A549 (cell line): ENCODE measurements at regions of chr4 and their contacts with region 1.

Region 1: DNA sequence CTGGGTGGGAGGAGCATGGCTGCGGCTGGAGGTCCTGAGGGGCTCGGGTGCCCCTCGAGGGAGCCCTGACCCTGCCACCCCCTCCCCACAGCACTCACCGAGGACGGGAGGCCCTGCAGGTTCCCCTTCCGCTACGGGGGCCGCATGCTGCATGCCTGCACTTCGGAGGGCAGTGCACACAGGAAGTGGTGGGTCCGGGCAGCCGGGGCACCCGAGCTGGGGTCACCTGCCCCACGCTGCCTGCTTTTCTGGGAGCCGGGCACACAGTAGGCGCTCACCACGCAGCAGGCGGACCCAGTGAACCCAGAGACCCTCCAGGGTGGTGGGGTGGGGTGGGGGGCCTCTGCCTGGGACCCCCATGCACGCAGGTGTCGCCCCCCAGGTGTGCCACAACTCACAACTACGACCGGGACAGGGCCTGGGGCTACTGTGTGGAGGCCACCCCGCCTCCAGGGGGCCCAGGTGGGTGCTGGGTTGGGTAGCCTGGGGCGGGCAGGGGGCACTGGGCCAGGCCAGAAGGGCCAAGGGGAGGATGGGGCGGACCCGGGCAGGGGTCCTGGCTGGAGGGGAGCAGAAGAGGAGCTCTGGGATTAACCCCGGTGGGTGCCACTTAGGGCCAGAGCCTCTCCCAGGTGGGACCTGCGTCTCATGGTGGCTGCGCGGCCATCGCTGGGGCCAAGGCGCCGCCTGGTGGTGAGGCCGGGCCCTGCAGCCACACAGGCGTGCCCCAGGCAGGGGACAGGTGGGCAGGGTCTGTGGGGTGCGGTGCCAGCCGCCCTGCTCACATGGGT is 1.4 kb downstream of the HGFAC start:
- DNase-seq: peak; percentile 40 to 58
- ATAC-seq: peak; percentile 54 to 86; a peak in 4 of 6 replicates
- H3K4me3 ChIP-seq: no peak overlapping the region
- H3K27ac ChIP-seq: peak overlapping the region in 1 of 2 experiments; percentile 38; a peak in 1 of 6 replicates
- H3K4me1 ChIP-seq: peaks cover 6% of the 10 kb centered on the region; the same call in 1 of the 3 replicates
- CTCF ChIP-seq: peak; percentile 84
- EP300 ChIP-seq: no peak
- POLR2A ChIP-seq: no peak
- RAD21 ChIP-seq: peak; percentile 80 to 88

Region 2: DNA sequence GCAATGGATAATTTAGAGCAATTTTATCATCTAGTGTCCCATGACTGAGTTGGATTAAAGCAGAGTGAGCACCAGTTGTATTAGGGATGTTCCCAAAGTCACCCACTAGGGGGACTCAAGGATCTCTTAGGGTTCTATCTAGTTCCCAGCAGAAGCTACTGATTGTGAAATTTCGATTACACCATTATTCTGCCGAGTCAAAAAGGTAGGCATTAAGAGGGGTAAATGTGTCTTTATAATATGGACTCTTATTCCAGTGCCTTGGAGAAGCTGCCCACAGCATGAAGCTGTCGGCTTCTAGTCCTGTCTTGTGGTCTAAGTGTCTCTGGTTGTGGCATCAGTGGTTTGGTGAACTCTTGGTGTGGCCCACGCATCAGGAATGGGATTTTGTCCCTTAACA is 97.0 kb before region 1 on chr4:
- CTCF ChIA-PET with region 1: interaction called, 30 read pairs
- POLR2A ChIA-PET with region 1: no interaction called
- DNase-seq: peak; percentile 60 to 63
- ATAC-seq: peak; percentile 85 to 92
- H3K4me3 ChIP-seq: no peak overlapping the region
- H3K27ac ChIP-seq: peak overlapping the region in 1 of 2 experiments; percentile 20; a peak in 1 of 6 replicates
- H3K4me1 ChIP-seq: peaks cover 20% of the 10 kb centered on the region
- CTCF ChIP-seq: peak; percentile 72
- EP300 ChIP-seq: no peak
- POLR2A ChIP-seq: no peak
- RAD21 ChIP-seq: peak; percentile 73 to 80